Stomach (tissue), 19 donors: ENCODE measurements at regions of chr4 and their contacts with region 1.

Region 1: GRCh38 chr4:186669159-186669731 is 54.4 kb downstream of the FAT1 start:
- DNase-seq: peak in 1 of 2 donors; percentile 75
- H3K4me3 ChIP-seq: no peak overlapping the region
- H3K27ac ChIP-seq: peak overlapping the region in 1 of 5 donors; percentile 9
- H3K4me1 ChIP-seq: peaks cover 0 to 12% (median 6%) of the 10 kb centered on the region in 4 donors
- H3K27me3 ChIP-seq: no peaks in the 10 kb centered on the region
- CTCF ChIP-seq: peak in 5 of 7 experiments; percentile 18 to 48 (median 38)
- EP300 ChIP-seq: peak; percentile 51
- POLR2A ChIP-seq: no peak

Region 2: GRCh38 chr4:186725469-186726425 is 56.5 kb after region 1 on chr4:
- intact Hi-C with region 1: loop called (anchors 10 kb)
- DNase-seq: peak; percentile 81 to 95
- H3K4me3 ChIP-seq: peak overlapping the region; percentile 69 to 85 (median 77)
- H3K27ac ChIP-seq: peak overlapping the region; percentile 89 to 95 (median 93)
- H3K4me1 ChIP-seq: peaks cover 0 to 51% (median 30%) of the 10 kb centered on the region in 4 donors
- H3K27me3 ChIP-seq: peaks cover 0 to 51% (median 19%) of the 10 kb centered on the region in 3 donors
- CTCF ChIP-seq: peak in 4 of 7 experiments; percentile 34 to 64 (median 44)
- EP300 ChIP-seq: no peak
- POLR2A ChIP-seq: no peak